ENCODE measurements at regions of chr4 and their contacts with region 1.

Region 1: GRCh38 chr4:166091912-166092510 is 219.0 kb downstream of the TLL1 start:
- DNase-seq: peak; percentile 15
- ATAC-seq: peak; percentile 58; the same call in 1 of the 2 replicates
- H3K4me3 ChIP-seq: no peak overlapping the region
- H3K27ac ChIP-seq: no peak overlapping the region
- H3K4me1 ChIP-seq: no peaks in the 10 kb centered on the region
- H3K27me3 ChIP-seq: no peaks in the 10 kb centered on the region
- CTCF ChIP-seq: peak; percentile 61 to 77 (median 64); a peak in 5 of 6 replicates
- POLR2A ChIP-seq: no peak
- RAD21 ChIP-seq: peak; percentile 80

Region 2: DNA sequence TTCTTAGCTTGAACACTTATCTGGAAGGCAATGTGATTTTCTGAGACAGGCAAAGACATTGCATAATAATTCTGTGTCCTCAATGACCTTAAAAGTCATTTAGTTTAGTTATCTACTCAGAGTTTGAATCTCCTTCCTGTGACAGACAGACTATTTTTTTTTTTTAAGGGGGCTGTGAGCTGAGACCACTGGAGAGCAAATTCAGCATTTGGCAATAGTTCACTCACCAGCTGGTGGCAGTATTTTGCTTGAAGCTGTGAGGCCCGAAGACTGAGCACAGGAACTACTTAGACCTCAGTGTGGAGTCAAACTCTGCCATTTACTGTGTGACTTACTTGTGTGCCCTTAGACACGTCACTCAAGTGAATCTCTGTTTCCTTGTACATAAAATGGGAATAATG is 736.1 kb before region 1 on chr4:
- CTCF ChIA-PET with region 1: no interaction called
- POLR2A ChIA-PET with region 1: no interaction called
- RAD21 ChIA-PET with region 1: no interaction called
- intact Hi-C with region 1: loop called (anchors 10 kb)
- DNase-seq: peak; percentile 59
- ATAC-seq: peak; percentile 93
- H3K4me3 ChIP-seq: no peak overlapping the region
- H3K27ac ChIP-seq: no peak overlapping the region
- H3K4me1 ChIP-seq: peaks cover 0 to 3% of the 10 kb centered on the region in 2 experiments; a peak in 2 of 4 replicates
- H3K27me3 ChIP-seq: no peaks in the 10 kb centered on the region
- CTCF ChIP-seq: peak; percentile 67 to 77 (median 67)
- POLR2A ChIP-seq: no peak
- RAD21 ChIP-seq: peak; percentile 83

Region 3: GRCh38 chr4:165493359-165493758 is 598.7 kb before region 1 on chr4:
- CTCF ChIA-PET with region 1: interaction called, 18 read pairs
- POLR2A ChIA-PET with region 1: no interaction called
- RAD21 ChIA-PET with region 1: interaction called in 1 of 2 experiments, 5 read pairs
- intact Hi-C with region 1: loop called (anchors 1 kb)
- DNase-seq: peak; percentile 37
- ATAC-seq: peak; percentile 100
- H3K4me3 ChIP-seq: no peak overlapping the region
- H3K27ac ChIP-seq: no peak overlapping the region
- H3K4me1 ChIP-seq: peaks cover 0 to 3% of the 10 kb centered on the region in 2 experiments; a peak in 2 of 4 replicates
- H3K27me3 ChIP-seq: no peaks in the 10 kb centered on the region
- CTCF ChIP-seq: peak; percentile 64 to 82 (median 65); a peak in 5 of 6 replicates
- POLR2A ChIP-seq: no peak
- RAD21 ChIP-seq: peak; percentile 93

Region 4: GRCh38 chr4:165864271-165864670 is 227.7 kb before region 1 on chr4:
- CTCF ChIA-PET with region 1: interaction called, 3 read pairs
- POLR2A ChIA-PET with region 1: no interaction called
- RAD21 ChIA-PET with region 1: no interaction called
- intact Hi-C with region 1: loop called (anchors 5 kb)
- DNase-seq: no peak
- ATAC-seq: peak; percentile 67
- H3K4me3 ChIP-seq: no peak overlapping the region
- H3K27ac ChIP-seq: no peak overlapping the region
- H3K4me1 ChIP-seq: no peaks in the 10 kb centered on the region
- H3K27me3 ChIP-seq: no peaks in the 10 kb centered on the region
- CTCF ChIP-seq: no peak; a peak in 1 of 6 replicates
- POLR2A ChIP-seq: no peak
- RAD21 ChIP-seq: peak; percentile 51

Region 5: DNA sequence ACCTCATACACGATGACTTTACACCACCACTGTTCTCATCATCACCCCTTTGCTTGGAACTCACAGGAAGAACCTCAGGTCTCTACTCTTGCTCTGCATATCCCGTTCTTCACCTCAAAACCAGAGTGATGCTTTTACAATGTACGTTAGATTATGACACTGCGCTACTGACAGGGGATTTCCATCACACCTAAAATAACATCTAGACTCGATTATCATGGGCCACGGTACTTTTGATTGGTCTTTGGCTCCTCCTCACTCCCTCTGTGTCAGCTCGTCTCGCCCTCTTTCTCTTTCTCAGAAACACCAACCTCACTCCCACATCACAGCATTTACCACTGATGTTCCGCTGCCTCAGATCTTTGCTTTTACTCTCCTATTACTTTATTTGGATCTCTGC is 46.6 kb before region 1 on chr4:
- CTCF ChIA-PET with region 1: no interaction called
- POLR2A ChIA-PET with region 1: no interaction called
- RAD21 ChIA-PET with region 1: no interaction called
- intact Hi-C with region 1: no loop called
- DNase-seq: no peak
- ATAC-seq: no peak
- H3K4me3 ChIP-seq: no peak overlapping the region
- H3K27ac ChIP-seq: no peak overlapping the region
- H3K4me1 ChIP-seq: no peaks in the 10 kb centered on the region
- H3K27me3 ChIP-seq: no peaks in the 10 kb centered on the region
- CTCF ChIP-seq: no peak
- POLR2A ChIP-seq: no peak
- RAD21 ChIP-seq: no peak

Region 6: DNA sequence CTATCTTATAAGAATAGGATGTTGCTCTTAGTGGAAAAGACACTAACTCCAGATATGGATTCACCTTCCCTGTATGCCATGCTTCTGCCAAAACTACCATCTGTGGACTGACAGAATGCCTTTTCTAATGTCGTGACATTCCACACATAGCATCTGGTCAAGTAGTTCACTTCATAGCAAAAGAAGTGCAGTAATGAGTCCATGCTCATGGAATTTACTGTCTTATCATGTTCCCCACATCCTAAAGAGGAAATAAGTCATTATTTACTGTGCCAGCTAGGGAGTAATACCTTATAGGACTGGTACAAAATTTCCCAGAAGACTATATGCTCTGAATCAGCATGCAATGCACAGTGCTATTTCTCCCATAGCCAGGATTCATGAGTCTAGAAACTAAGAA is 343.4 kb after region 1 on chr4:
- CTCF ChIA-PET with region 1: no interaction called
- POLR2A ChIA-PET with region 1: no interaction called
- RAD21 ChIA-PET with region 1: no interaction called
- intact Hi-C with region 1: no loop called
- DNase-seq: no peak
- ATAC-seq: no peak
- H3K4me3 ChIP-seq: no peak overlapping the region
- H3K27ac ChIP-seq: no peak overlapping the region
- H3K4me1 ChIP-seq: no peaks in the 10 kb centered on the region
- H3K27me3 ChIP-seq: no peaks in the 10 kb centered on the region
- CTCF ChIP-seq: no peak
- POLR2A ChIP-seq: no peak
- RAD21 ChIP-seq: no peak

Measured in HCT116 (cell line).